ENCODE measurements at regions of chr2 and their contacts with region 1.

Region 1: DNA sequence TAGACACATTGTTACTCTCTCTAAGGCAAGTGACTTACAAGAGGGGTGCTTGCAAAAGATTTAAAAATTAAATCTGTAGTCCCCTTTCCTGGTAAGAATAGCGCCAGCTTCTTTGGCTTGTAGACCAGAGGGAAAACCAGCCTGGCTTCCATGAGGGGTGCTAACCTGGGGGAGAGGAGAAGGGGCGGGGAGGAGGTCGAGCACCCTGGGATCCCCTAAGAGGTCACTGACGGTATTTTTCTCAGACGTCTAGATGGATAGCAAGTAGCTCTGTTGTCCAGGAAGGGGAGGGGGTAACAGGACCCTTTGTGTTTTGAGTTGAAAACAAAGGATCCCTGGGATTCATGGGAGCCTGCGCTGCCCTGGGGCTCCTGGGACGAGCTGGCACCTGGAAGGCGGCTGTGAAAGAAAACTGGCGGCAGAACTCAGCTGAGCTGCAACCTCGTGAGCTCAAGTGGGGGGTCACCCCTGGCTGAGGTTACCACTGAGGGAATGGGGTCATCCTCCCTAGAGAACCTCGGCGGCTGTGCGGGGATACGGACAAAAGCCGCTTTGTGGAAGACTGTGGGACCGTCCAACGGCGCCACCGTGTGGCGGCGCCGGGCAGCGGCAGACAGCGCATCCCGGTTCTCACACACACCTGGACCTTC is 37.8 kb upstream of the MRPL19 start:
- DNase-seq: no peak
- H3K4me3 ChIP-seq: no peak overlapping the region
- H3K27ac ChIP-seq: no peak overlapping the region
- H3K27me3 ChIP-seq: no peaks in the 10 kb centered on the region
- CTCF ChIP-seq: peak; percentile 99

Region 2: GRCh38 chr2:75466708-75467311 is 142.0 kb before region 1 on chr2:
- CTCF ChIA-PET with region 1: interaction called, 245 read pairs
- POLR2A ChIA-PET with region 1: no interaction called
- DNase-seq: no peak
- H3K4me3 ChIP-seq: no peak overlapping the region
- H3K27ac ChIP-seq: no peak overlapping the region
- H3K27me3 ChIP-seq: no peaks in the 10 kb centered on the region
- CTCF ChIP-seq: peak; percentile 59

Region 3: DNA sequence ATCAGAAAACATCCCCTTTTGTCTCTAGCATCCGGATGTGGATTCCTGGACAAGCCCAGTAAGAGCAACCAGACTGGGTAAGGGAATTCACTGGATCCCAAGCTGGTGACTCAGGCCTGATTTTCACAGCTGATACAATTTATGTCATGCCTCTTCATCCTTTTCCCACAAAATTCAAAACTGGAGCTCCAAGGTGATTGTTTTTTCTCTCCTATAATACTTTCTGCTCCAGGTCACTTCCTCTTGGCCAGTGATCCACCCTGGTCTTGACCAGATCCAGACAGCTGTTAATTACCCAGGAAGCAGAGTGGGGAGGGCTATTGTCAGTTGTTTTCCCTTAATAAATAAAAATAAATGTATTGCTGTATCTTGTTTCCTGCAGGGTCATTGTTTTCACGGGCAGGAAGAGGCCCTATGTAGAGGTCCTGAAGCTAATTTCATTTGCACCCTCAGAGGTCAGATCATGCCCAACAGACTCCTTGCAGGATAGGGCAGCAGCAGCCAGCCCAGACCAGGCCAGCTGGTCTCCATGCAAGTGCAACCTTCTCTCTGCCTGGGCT is 105.7 kb before region 1 on chr2:
- CTCF ChIA-PET with region 1: interaction called, 19 read pairs
- POLR2A ChIA-PET with region 1: no interaction called
- DNase-seq: peak; percentile 45
- H3K4me3 ChIP-seq: no peak overlapping the region
- H3K27ac ChIP-seq: peak overlapping the region; percentile 47
- H3K27me3 ChIP-seq: no peaks in the 10 kb centered on the region
- CTCF ChIP-seq: no peak

Region 4: GRCh38 chr2:75548036-75548573 is 60.7 kb before region 1 on chr2:
- CTCF ChIA-PET with region 1: interaction called, 14 read pairs
- POLR2A ChIA-PET with region 1: no interaction called
- DNase-seq: no peak
- H3K4me3 ChIP-seq: no peak overlapping the region
- H3K27ac ChIP-seq: peak overlapping the region; percentile 86
- H3K27me3 ChIP-seq: no peaks in the 10 kb centered on the region
- CTCF ChIP-seq: no peak

Region 5: GRCh38 chr2:75570948-75571729 is 37.7 kb before region 1 on chr2:
- CTCF ChIA-PET with region 1: interaction called, 38 read pairs
- POLR2A ChIA-PET with region 1: no interaction called
- DNase-seq: peak; percentile 50
- H3K4me3 ChIP-seq: no peak overlapping the region
- H3K27ac ChIP-seq: peak overlapping the region; percentile 74
- H3K27me3 ChIP-seq: no peaks in the 10 kb centered on the region
- CTCF ChIP-seq: no peak

Region 6: GRCh38 chr2:75595551-75596395 is 13.0 kb before region 1 on chr2:
- CTCF ChIA-PET with region 1: interaction called, 43 read pairs
- POLR2A ChIA-PET with region 1: interaction called, 48 read pairs
- DNase-seq: peak; percentile 78
- H3K4me3 ChIP-seq: no peak overlapping the region
- H3K27ac ChIP-seq: peak overlapping the region; percentile 87
- H3K27me3 ChIP-seq: no peaks in the 10 kb centered on the region
- CTCF ChIP-seq: no peak

Region 7: GRCh38 chr2:75627895-75628504 is 19.2 kb after region 1 on chr2:
- CTCF ChIA-PET with region 1: interaction called, 37 read pairs
- POLR2A ChIA-PET with region 1: no interaction called
- DNase-seq: no peak
- H3K4me3 ChIP-seq: no peak overlapping the region
- H3K27ac ChIP-seq: no peak overlapping the region
- H3K27me3 ChIP-seq: peaks cover 8% of the 10 kb centered on the region
- CTCF ChIP-seq: peak; percentile 99

Region 8: GRCh38 chr2:75764611-75765010 is 155.8 kb after region 1 on chr2:
- CTCF ChIA-PET with region 1: no interaction called
- POLR2A ChIA-PET with region 1: no interaction called
- DNase-seq: no peak
- H3K4me3 ChIP-seq: no peak overlapping the region
- H3K27ac ChIP-seq: no peak overlapping the region
- H3K27me3 ChIP-seq: peaks cover 5% of the 10 kb centered on the region
- CTCF ChIP-seq: no peak

Region 9: GRCh38 chr2:75833386-75833785 is 224.6 kb after region 1 on chr2:
- CTCF ChIA-PET with region 1: no interaction called
- POLR2A ChIA-PET with region 1: no interaction called
- DNase-seq: no peak
- H3K4me3 ChIP-seq: no peak overlapping the region
- H3K27ac ChIP-seq: no peak overlapping the region
- H3K27me3 ChIP-seq: no peaks in the 10 kb centered on the region
- CTCF ChIP-seq: no peak

Measured in AG04450 (cell line).